Panc1 (cell line): ENCODE measurements at regions of chr17 and their contacts with region 1.

Region 1: GRCh38 chr17:48283411-48283810 is 146.6 kb downstream of the SKAP1 start:
- DNase-seq: no peak
- ATAC-seq: no peak
- H3K4me3 ChIP-seq: no peak overlapping the region
- H3K27ac ChIP-seq: no peak overlapping the region
- H3K4me1 ChIP-seq: no peaks in the 10 kb centered on the region
- H3K27me3 ChIP-seq: no peaks in the 10 kb centered on the region
- CTCF ChIP-seq: no peak

Region 2: DNA sequence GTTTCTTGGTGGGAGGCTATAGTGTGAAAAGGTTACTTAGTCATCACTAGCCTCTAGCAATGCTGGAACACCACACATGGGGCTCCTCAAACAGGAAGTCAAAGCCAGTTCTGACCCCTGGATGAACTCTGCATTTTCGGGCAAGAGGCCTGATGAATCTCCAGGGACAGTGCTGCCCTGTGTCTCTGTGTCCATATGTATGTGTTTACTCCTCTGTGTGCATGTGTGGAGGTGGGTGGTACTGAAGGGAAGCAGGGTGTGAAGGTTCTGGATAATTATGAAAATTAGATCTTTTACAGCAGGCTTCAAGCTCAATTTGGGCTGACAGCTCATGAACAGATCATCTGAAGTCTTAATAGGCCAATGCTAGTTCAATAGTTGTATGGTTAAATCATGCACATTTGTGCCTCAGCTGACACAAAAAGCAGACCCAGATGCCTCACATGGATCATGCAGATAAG is 42.2 kb before region 1 on chr17:
- CTCF ChIA-PET with region 1: no interaction called
- POLR2A ChIA-PET with region 1: no interaction called
- in situ Hi-C with region 1: loop called (anchors 5 kb)
- intact Hi-C with region 1: no loop called
- DNase-seq: peak; percentile 47
- ATAC-seq: peak; percentile 86
- H3K4me3 ChIP-seq: no peak overlapping the region
- H3K27ac ChIP-seq: peak overlapping the region; percentile 84
- H3K4me1 ChIP-seq: peaks cover 62% of the 10 kb centered on the region
- H3K27me3 ChIP-seq: no peaks in the 10 kb centered on the region
- CTCF ChIP-seq: no peak